Heart right ventricle (tissue), 16 donors: ENCODE measurements at regions of chr17 and their contacts with region 1.

Region 1: GRCh38 chr17:5419356-5419958 is at the start of gene NUP88:
- DNase-seq: peak; percentile 94 to 95
- ATAC-seq: peak; percentile 97 to 99 (median 99)
- H3K4me3 ChIP-seq: peak within 1 kb of the TSS; percentile 62 to 95 (median 84)
- H3K27ac ChIP-seq: peak within 1 kb of the TSS; percentile 70 to 91 (median 86)
- H3K4me1 ChIP-seq: peaks cover 4 to 38% (median 32%) of the 10 kb centered on the region in 9 donors
- H3K27me3 ChIP-seq: no peaks in the 10 kb centered on the region
- CTCF ChIP-seq: no peak
- total RNA-seq, gene NUP88: 23.3 to 41.6 (median 35.3) TPM

Region 2: GRCh38 chr17:5486204-5487124 is 67.0 kb after region 1 on chr17 and contains the start of gene MIS12:
- intact Hi-C with region 1: loop called in 1 of 10 experiments (anchors 2 kb)
- DNase-seq: peak; percentile 93 to 99
- ATAC-seq: peak; percentile 95 to 99 (median 97)
- H3K4me3 ChIP-seq: peak within 1 kb of the TSS; percentile 65 to 96 (median 87)
- H3K27ac ChIP-seq: peak within 1 kb of the TSS; percentile 97 to 100 (median 100)
- H3K4me1 ChIP-seq: peaks cover 4 to 42% (median 31%) of the 10 kb centered on the region in 9 donors
- H3K27me3 ChIP-seq: no peaks in the 10 kb centered on the region
- CTCF ChIP-seq: no peak
- total RNA-seq, gene MIS12: 6.6 to 13.2 (median 9.4) TPM

Region 3: DNA sequence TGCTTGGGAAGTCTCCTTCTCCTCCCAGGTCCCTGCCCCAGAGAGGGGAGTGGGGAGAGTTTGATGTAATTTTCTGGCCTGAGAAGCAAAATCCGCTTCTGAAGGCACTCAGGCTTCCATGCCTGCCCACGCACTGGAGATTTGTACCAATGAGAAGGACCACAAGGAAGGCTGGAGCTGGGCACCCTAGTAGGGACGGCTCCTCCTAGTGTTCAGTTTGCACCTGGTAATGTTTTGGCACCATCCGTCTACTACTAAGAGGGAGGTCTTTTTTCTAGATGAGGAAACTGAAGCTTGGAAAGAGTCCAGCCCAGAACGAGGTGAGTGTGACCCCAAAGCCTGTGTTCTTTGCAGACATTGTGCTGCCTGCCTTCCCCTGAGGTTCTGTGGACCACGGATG is 248.4 kb after region 1 on chr17:
- intact Hi-C with region 1: no loop called
- DNase-seq: no peak
- ATAC-seq: no peak
- H3K4me3 ChIP-seq: no peak overlapping the region
- H3K27ac ChIP-seq: no peak overlapping the region
- H3K4me1 ChIP-seq: no peaks in the 10 kb centered on the region
- H3K27me3 ChIP-seq: peaks cover 0 to 58% (median 43%) of the 10 kb centered on the region in 7 donors
- CTCF ChIP-seq: peak in 1 of 9 donors; percentile 24